GM12878 (cell line): ENCODE measurements at regions of chrX and their contacts with region 1.

Region 1: DNA sequence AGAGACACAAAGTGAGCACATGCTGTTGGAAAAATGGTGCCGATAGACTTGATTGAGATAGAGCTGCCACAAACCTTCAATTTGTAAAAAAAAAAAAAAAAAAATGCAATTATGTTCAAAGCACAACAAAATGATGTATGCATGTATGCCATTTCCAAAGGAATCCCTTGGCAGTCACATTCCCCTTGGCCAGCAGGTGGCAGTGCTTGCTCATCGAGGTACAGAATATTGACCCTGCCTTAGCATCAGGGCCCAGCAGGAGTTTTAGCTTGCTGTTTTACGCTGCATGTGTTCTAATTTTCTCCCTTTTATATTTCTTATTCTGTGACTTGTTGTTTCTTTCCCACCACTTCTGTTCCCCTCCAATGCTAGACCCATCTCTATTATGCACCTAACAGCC is 34.5 kb upstream of the CYBB start:
- DNase-seq: peak; percentile 53
- ATAC-seq: peak; percentile 86
- H3K4me3 ChIP-seq: no peak overlapping the region
- H3K27ac ChIP-seq: peak overlapping the region; percentile 69
- H3K4me1 ChIP-seq: peaks cover 15% of the 10 kb centered on the region
- H3K27me3 ChIP-seq: no peaks in the 10 kb centered on the region; a peak in 1 of 4 replicates
- CTCF ChIP-seq: peak; percentile 84 to 91 (median 84)
- EP300 ChIP-seq: no peak
- POLR2A ChIP-seq: no peak
- RAD21 ChIP-seq: peak; percentile 97

Region 2: DNA sequence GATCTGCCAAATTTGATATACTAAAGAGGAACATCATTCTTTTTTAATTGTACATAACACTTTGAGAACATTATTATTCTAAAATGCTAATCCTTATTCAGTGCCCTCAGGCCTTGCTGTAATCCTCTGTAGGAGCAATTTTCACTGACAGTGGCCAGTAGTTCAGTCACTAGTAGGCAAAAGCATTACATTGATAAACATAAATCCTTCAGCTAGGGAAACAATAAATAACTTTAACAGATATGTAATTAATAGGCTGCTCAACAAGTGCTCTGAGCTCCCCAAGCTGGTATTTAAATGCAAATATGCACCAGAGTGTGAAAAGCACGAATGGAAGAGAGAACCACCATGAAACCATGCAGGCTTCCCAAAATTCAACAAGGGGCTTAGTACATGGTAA is 814.9 kb before region 1 on chrX:
- CTCF ChIA-PET with region 1: no interaction called
- POLR2A ChIA-PET with region 1: no interaction called
- RAD21 ChIA-PET with region 1: no interaction called
- SMC1A ChIA-PET with region 1: no interaction called
- in situ Hi-C with region 1: no loop called
- intact Hi-C with region 1: no loop called
- DNase-seq: no peak
- ATAC-seq: no peak
- H3K4me3 ChIP-seq: no peak overlapping the region
- H3K27ac ChIP-seq: no peak overlapping the region
- H3K4me1 ChIP-seq: no peaks in the 10 kb centered on the region
- H3K27me3 ChIP-seq: no peaks in the 10 kb centered on the region
- CTCF ChIP-seq: no peak
- EP300 ChIP-seq: no peak
- POLR2A ChIP-seq: no peak
- RAD21 ChIP-seq: no peak

Region 3: GRCh38 chrX:37776283-37776986 is 31.1 kb after region 1 on chrX:
- CTCF ChIA-PET with region 1: interaction called, 68 read pairs
- POLR2A ChIA-PET with region 1: interaction called, 19 read pairs
- RAD21 ChIA-PET with region 1: interaction called, 183 read pairs
- SMC1A ChIA-PET with region 1: interaction called, 157 read pairs
- in situ Hi-C with region 1: no loop called
- intact Hi-C with region 1: loop called (anchors 2 kb)
- DNase-seq: no peak
- ATAC-seq: peak; percentile 80
- H3K4me3 ChIP-seq: peak overlapping the region; percentile 23; the same call in 1 of the 2 replicates
- H3K27ac ChIP-seq: peak overlapping the region; percentile 85
- H3K4me1 ChIP-seq: peaks cover 22% of the 10 kb centered on the region
- H3K27me3 ChIP-seq: no peaks in the 10 kb centered on the region
- CTCF ChIP-seq: no peak
- EP300 ChIP-seq: no peak
- POLR2A ChIP-seq: no peak
- RAD21 ChIP-seq: no peak

Region 4: DNA sequence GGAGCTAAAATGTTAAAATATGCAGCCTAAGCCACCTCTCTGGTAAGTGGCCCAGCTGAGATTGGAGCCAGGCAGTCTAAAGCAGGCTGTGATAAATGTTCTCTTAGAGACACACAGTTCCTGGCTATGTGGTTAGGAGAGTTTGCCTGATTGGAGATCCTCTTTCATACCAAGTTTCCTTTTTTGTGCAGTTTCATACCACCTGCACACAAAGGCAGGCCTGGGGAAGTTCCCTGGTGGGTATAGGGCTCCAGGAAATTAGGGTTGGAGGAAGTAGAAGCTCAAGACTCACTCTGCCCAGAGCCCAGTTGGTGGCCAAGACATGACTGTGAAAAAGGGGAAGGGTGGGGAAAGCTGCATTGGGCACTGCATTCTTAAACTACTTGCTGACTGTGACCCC is 51.5 kb after region 1 on chrX:
- CTCF ChIA-PET with region 1: interaction called, 21 read pairs
- POLR2A ChIA-PET with region 1: no interaction called
- RAD21 ChIA-PET with region 1: interaction called, 12 read pairs
- SMC1A ChIA-PET with region 1: interaction called, 23 read pairs
- in situ Hi-C with region 1: no loop called
- intact Hi-C with region 1: no loop called
- DNase-seq: no peak
- ATAC-seq: peak; percentile 81
- H3K4me3 ChIP-seq: no peak overlapping the region
- H3K27ac ChIP-seq: peak overlapping the region; percentile 38
- H3K4me1 ChIP-seq: peaks cover 21% of the 10 kb centered on the region
- H3K27me3 ChIP-seq: no peaks in the 10 kb centered on the region
- CTCF ChIP-seq: no peak
- EP300 ChIP-seq: no peak
- POLR2A ChIP-seq: no peak
- RAD21 ChIP-seq: no peak

Region 5: DNA sequence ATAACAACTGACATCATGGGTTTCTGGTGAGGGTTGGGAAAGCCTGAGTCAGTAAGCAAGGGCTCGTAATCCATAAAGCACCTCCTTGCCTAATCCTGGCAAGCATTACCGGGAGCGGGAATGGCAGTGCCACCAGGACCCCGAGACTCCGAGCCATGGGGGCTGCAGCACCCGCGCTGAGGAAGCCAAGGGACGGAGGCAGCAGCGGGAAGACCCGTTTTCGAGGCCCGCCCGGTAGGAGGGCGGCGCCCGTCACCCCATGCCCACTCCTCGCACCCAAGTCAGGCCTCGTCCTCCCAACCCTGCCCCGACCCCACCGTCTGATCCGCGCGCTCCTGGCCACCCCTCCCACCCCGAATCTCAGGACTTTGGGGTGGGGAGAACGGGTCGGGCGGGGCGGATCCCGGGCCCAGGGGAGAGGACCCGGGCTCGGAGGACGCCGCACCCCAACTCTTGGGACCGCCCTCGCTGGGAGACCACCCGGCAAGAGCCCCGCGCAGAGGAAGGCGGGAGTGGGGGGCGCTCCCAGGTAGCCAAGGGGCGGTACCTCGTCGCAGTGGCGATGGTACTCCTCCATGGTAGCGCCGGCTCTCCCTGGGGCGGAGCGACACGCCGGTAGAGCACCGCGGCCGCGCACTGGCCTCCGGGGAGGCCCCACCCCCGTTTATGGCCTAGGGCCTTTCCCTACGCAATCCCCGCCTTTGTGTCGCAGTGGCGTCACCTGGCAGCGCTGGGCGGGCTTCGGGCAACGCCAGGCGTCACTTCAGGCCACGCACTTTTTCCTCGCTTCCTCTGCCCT is 101.8 kb after region 1 on chrX and contains the start of gene DYNLT3:
- CTCF ChIA-PET with region 1: interaction called, 6 read pairs
- POLR2A ChIA-PET with region 1: no interaction called
- RAD21 ChIA-PET with region 1: interaction called, 9 read pairs
- SMC1A ChIA-PET with region 1: interaction called, 16 read pairs
- in situ Hi-C with region 1: no loop called
- intact Hi-C with region 1: no loop called
- DNase-seq: peak; percentile 39
- ATAC-seq: peak; percentile 99
- H3K4me3 ChIP-seq: peak within 1 kb of the TSS; percentile 81
- H3K27ac ChIP-seq: peak within 1 kb of the TSS; percentile 46; the same call in 1 of the 2 replicates
- H3K4me1 ChIP-seq: no peaks in the 10 kb centered on the region
- H3K27me3 ChIP-seq: no peaks in the 10 kb centered on the region
- CTCF ChIP-seq: no peak
- EP300 ChIP-seq: no peak
- POLR2A ChIP-seq: peak; percentile 66
- RAD21 ChIP-seq: no peak
- polyA plus RNA-seq, gene DYNLT3: 14.9 to 19.2 TPM